ENCODE measurements at regions of chr7 and their contacts with region 1.

Region 1: GRCh38 chr7:143240291-143241168 is 18.7 kb downstream of the TAS2R40 start:
- DNase-seq: peak; percentile 37
- H3K27ac ChIP-seq: no peak overlapping the region
- CTCF ChIP-seq: peak; percentile 98

Region 2: DNA sequence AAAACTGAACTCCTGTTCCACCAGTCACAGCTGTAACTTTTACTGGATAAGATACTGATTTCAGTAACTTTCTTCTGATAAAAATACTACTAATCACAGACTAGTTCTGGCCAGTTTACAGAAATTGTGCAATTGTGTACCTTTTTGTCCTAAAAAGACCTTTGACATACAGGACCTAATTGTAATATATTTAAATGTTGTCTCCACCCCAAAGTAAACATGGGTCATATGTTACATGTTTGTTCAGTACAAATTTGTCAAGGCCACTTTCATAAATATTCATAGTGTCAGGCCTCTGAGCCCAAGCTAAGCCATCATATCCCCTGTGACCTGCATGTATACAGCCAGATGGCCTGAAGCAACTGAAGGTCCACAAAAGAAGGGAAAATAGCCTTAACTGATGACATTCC is 135.7 kb before region 1 on chr7:
- CTCF ChIA-PET with region 1: no interaction called
- POLR2A ChIA-PET with region 1: no interaction called
- DNase-seq: no peak
- H3K27ac ChIP-seq: no peak overlapping the region
- CTCF ChIP-seq: no peak

Region 3: DNA sequence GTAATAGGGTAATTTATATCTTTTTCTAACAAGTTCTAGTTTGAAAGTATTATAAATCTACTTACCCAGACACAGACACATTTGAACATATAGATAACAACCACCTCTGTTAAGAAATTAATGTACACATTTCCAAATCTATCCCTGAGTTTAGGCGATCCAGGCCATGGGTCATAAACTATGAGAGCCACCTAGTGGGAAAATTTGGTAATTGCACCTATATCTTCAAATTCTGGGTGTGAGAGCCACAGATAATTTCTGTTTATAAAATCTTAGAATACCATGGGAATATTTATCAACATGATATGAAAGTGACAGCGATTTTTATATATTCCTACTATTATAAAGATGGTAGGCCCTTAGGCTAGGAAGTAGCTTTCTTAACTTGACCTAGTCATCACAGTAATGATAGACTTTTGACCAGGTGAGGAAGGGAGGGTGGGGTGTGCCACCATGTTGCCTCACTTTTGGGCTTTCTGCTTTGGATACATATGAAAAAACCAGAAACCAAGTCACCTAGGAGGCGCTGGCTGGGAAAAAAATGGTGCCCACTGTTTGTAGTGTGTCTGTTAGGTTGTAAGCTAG is 176.1 kb after region 1 on chr7:
- CTCF ChIA-PET with region 1: interaction called, 11 read pairs
- POLR2A ChIA-PET with region 1: no interaction called
- DNase-seq: peak; percentile 48
- H3K27ac ChIP-seq: no peak overlapping the region
- CTCF ChIP-seq: peak; percentile 89

Measured in RWPE1 (cell line).